Kidney (tissue), 22 donors: ENCODE measurements at regions of chr4 and their contacts with region 1.

Region 1: DNA sequence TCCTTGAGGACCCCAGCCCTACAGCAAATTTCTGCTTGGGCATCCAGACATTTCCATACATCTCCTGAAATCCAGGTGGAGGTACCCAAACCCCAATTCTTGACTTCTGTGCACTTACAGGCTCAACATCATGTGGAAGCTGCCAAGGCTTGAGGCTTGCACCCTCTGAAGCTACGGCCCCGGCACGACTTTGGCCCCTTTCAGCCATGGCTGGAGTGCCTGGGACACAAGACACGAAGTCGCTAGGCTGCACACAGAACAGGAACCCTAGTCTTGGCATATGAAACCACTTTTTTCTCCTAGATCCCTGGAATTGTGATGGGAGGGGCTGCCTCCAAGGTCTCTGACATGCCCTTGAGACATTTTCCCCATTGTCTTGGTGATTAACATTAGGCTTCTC is 1417.7 kb downstream of the ARAP2 start:
- DNase-seq: no peak
- H3K4me3 ChIP-seq: no peak overlapping the region
- H3K27ac ChIP-seq: no peak overlapping the region
- H3K4me1 ChIP-seq: no peaks in the 10 kb centered on the region
- H3K27me3 ChIP-seq: no peaks in the 10 kb centered on the region
- CTCF ChIP-seq: no peak

Region 2: GRCh38 chr4:34771632-34772031 is 55.0 kb before region 1 on chr4:
- intact Hi-C with region 1: loop called (anchors 2 kb)
- DNase-seq: no peak
- H3K4me3 ChIP-seq: no peak overlapping the region
- H3K27ac ChIP-seq: no peak overlapping the region
- H3K4me1 ChIP-seq: no peaks in the 10 kb centered on the region
- H3K27me3 ChIP-seq: no peaks in the 10 kb centered on the region
- CTCF ChIP-seq: no peak

Region 3: DNA sequence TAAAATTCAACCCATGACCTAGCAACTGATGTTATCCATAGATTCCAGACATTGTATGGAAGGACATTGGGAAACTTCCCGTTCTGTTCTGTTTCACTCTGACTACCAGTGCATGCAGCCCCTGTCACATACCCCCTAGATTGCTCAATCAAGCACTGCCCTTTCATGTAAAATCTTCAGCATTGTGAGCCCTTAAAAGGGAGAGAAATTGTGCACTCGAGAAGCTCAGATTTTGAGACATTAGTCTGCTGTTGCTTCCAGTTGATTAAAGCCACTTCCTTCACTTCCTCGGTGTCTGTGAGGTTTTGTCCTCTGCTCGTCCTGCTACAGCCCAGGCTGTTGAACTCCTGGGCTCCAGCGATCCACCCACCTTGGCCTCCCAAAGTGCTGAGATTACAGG is 282.3 kb after region 1 on chr4:
- intact Hi-C with region 1: no loop called
- DNase-seq: no peak
- H3K4me3 ChIP-seq: no peak overlapping the region
- H3K27ac ChIP-seq: no peak overlapping the region
- H3K4me1 ChIP-seq: no peaks in the 10 kb centered on the region
- H3K27me3 ChIP-seq: no peaks in the 10 kb centered on the region
- CTCF ChIP-seq: no peak